AG04450 (cell line): ENCODE measurements at regions of chr7 and their contacts with region 1.

Region 1: GRCh38 chr7:95871078-95871782 is 98.9 kb downstream of the DYNC1I1 start:
- DNase-seq: peak; percentile 7
- H3K4me3 ChIP-seq: no peak overlapping the region
- H3K27ac ChIP-seq: no peak overlapping the region
- H3K27me3 ChIP-seq: no peaks in the 10 kb centered on the region
- CTCF ChIP-seq: peak; percentile 67

Region 2: GRCh38 chr7:95481556-95482162 is 389.6 kb before region 1 on chr7:
- CTCF ChIA-PET with region 1: no interaction called
- POLR2A ChIA-PET with region 1: no interaction called
- DNase-seq: no peak
- H3K4me3 ChIP-seq: no peak overlapping the region
- H3K27ac ChIP-seq: no peak overlapping the region
- H3K27me3 ChIP-seq: peaks cover 3% of the 10 kb centered on the region
- CTCF ChIP-seq: no peak

Region 3: DNA sequence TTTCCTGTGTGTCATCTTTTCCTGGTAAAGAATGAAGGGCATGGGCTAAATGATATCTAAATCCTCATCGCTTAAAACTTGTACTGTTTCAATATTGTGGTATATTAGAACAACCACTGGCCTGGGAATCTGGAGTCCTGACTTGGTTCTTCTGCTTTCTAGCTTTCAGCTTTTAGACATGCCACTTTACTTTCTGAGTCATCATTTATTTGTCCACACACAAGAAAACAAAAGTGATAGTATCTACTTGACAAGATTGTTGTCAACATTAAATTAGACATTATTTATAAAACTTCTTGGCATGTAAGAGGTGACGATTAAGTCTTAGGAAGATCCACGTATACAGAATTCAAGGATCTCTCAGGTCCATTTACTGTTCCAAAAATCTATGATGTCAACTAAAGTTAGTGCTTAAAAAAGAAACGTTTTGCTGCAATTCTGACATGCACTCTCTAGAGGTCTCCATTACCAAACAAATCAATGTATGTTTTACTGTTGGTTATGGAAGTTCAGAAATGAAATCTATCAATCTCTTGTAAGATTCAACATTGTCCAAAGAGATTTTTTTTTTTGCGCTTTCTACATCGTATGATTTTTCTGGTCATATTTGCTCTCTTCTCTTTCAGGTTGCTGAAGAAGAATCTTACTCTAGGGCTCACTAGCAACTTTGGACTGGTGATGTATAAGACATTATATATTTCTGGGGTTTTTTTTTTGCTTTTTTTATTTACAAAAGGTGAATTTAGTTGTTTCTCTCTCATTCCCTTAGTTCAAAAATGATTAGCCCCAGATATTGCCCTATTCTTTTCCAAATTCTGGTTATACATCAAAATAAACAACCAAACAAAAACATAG is 152.4 kb before region 1 on chr7:
- CTCF ChIA-PET with region 1: interaction called, 11 read pairs
- POLR2A ChIA-PET with region 1: no interaction called
- DNase-seq: no peak
- H3K4me3 ChIP-seq: no peak overlapping the region
- H3K27ac ChIP-seq: no peak overlapping the region
- H3K27me3 ChIP-seq: no peaks in the 10 kb centered on the region
- CTCF ChIP-seq: peak; percentile 30; the same call in 1 of the 2 replicates